MCF 10A (cell line): ENCODE measurements at regions of chr1 and their contacts with region 1.

Region 1: DNA sequence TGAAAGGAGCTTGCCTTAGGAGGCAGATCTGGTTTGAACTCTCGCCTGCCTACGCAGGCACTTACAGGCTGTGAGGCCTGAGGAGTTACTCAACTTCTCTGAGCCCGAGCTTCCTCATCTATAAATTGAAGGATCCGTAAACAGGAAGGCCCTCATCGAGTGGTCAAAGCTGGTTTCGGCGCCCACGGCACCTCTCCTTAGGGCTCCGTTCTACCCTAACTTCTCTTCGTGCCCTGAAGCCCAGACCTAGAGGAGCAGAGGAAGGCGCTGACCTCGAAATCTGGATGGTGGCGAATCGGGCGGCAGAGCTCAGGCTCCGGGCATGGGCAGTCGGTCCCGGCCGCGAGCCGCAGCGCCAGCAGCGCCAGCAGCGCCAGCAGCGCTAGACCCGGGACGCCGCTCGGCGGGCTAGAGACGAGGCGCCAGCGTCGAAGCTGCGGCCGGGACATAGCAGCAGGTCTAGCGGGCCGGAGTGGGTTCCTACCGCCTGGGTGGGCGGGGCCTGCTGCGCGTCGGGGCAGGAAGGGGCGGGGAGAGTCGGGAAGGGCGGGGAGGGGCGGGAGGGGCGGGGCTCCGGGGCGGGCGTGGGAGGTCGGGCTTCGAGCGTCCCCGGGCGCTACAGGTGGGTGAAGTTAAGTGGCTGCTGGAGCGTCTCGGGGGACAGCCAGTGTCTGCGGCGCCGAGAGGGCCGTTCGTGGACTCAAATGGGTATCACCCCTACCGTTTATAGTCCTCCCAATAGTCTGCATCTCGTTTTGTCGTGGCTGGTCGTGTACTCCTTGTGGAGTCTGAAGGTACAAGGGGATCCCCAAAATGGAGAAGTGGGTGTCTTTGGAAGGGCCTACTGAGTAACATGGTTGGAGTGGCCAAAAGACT is at the start of gene CTBS:
- DNase-seq: peak; percentile 79
- H3K4me3 Mint-ChIP-seq: peak within 1 kb of the TSS; percentile 95
- H3K27ac Mint-ChIP-seq: peak within 1 kb of the TSS; percentile 99
- H3K4me1 Mint-ChIP-seq: peaks cover 36% of the 10 kb centered on the region
- H3K27me3 Mint-ChIP-seq: no peaks in the 10 kb centered on the region
- CTCF ChIP-seq: no peak
- total RNA-seq, gene CTBS: 14.0 and 20.9 TPM in 2 replicates

Region 2: GRCh38 chr1:84478876-84479868 is 95.0 kb before region 1 on chr1 and contains the start of gene RPF1:
- CTCF ChIA-PET with region 1: interaction called, 9 read pairs
- POLR2A ChIA-PET with region 1: interaction called, 37 read pairs
- intact Hi-C with region 1: loop called (anchors 1 kb)
- DNase-seq: peak; percentile 83
- H3K4me3 Mint-ChIP-seq: peak within 1 kb of the TSS; percentile 88
- H3K27ac Mint-ChIP-seq: peak within 1 kb of the TSS; percentile 95
- H3K4me1 Mint-ChIP-seq: peaks cover 21% of the 10 kb centered on the region
- H3K27me3 Mint-ChIP-seq: no peaks in the 10 kb centered on the region
- CTCF ChIP-seq: no peak
- total RNA-seq, gene RPF1: 36.0 and 43.1 TPM in 2 replicates

Region 3: DNA sequence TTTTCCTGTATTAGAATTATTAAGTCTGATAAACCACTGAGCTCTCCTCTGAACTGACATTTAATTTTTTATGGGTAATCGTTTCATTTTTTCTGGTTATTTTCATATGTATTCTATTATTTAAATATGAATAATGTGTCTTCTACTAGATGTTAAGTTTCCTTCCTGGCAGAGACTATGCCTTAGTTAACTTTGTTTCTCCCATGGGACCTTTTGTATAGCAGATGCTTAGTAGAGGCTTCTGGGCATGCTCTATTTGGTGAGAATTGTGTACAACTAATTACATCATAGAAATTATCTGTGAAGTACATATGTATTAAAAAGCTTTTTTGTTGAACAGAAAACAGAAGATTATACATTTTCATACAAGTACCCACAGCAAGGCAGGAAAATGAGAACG is 23.4 kb before region 1 on chr1:
- CTCF ChIA-PET with region 1: no interaction called
- POLR2A ChIA-PET with region 1: interaction called, 20 read pairs
- intact Hi-C with region 1: no loop called
- DNase-seq: no peak
- H3K4me3 Mint-ChIP-seq: no peak overlapping the region
- H3K27ac Mint-ChIP-seq: no peak overlapping the region
- H3K4me1 Mint-ChIP-seq: no peaks in the 10 kb centered on the region
- H3K27me3 Mint-ChIP-seq: no peaks in the 10 kb centered on the region
- CTCF ChIP-seq: no peak

Region 4: DNA sequence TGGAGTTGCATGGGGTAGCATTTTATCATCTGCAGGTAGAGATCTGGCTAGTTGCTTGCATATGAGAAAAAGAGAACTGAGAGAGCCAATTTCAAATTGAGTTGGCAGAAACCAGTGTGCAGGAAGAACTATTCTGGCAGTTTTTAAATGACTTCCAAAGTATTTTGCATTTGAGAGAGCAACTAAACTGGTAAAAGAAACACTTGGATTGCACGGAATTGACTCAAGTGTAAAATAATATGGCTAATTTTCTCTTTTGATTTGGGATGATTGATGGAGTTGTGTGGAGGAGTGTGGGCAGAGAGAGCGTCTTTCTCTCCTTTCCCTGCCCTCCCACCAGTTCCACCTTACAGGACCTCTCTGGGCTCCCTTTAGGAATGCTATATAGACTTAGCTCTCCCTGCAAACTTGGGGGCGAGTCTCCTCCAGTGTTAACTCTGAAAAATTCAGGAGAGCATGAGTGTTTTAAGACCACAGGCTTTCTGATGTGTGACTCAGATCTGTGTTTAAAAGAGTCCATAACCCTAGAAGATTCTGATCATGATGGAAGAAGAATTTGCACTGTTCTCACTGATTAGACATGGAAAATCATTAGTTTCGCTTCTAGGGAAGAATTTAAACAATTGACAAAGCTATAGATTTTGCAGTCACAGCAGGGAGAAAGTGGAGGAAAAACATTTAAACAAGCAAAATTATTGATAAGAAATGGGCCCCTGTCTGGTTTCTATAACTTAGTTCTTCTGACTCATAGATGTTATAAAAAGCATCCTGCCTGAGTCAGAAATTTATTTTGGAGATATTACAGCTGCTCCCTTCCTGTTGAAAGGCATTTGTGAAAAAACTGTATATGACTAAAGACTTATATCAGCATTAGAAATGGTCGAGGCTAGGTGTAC is 24.9 kb after region 1 on chr1:
- CTCF ChIA-PET with region 1: interaction called, 6 read pairs
- POLR2A ChIA-PET with region 1: interaction called, 61 read pairs
- intact Hi-C with region 1: no loop called
- DNase-seq: peak; percentile 36
- H3K4me3 Mint-ChIP-seq: peak overlapping the region; percentile 41
- H3K27ac Mint-ChIP-seq: peak overlapping the region; percentile 87
- H3K4me1 Mint-ChIP-seq: peaks cover 23% of the 10 kb centered on the region
- H3K27me3 Mint-ChIP-seq: no peaks in the 10 kb centered on the region
- CTCF ChIP-seq: no peak

Region 5: GRCh38 chr1:84603941-84604830 is 30.0 kb after region 1 on chr1:
- CTCF ChIA-PET with region 1: interaction called, 9 read pairs
- POLR2A ChIA-PET with region 1: interaction called, 61 read pairs
- intact Hi-C with region 1: no loop called
- DNase-seq: peak; percentile 96
- H3K4me3 Mint-ChIP-seq: peak overlapping the region; percentile 73
- H3K27ac Mint-ChIP-seq: peak overlapping the region; percentile 76
- H3K4me1 Mint-ChIP-seq: peaks cover 26% of the 10 kb centered on the region
- H3K27me3 Mint-ChIP-seq: no peaks in the 10 kb centered on the region
- CTCF ChIP-seq: peak; percentile 11

Region 6: GRCh38 chr1:84690397-84691121 is 116.4 kb after region 1 on chr1 and contains the start of gene SSX2IP:
- CTCF ChIA-PET with region 1: no interaction called
- POLR2A ChIA-PET with region 1: interaction called, 14 read pairs
- intact Hi-C with region 1: no loop called
- DNase-seq: peak; percentile 97
- H3K4me3 Mint-ChIP-seq: peak within 1 kb of the TSS; percentile 97
- H3K27ac Mint-ChIP-seq: peak within 1 kb of the TSS; percentile 83
- H3K4me1 Mint-ChIP-seq: peaks cover 40% of the 10 kb centered on the region
- H3K27me3 Mint-ChIP-seq: no peaks in the 10 kb centered on the region
- CTCF ChIP-seq: no peak
- total RNA-seq, gene SSX2IP: 19.4 and 20.5 TPM in 2 replicates